Stomach (tissue), 19 donors: ENCODE measurements at regions of chr10 and their contacts with region 1.

Region 1: GRCh38 chr10:511101-511848 is 178.2 kb downstream of the DIP2C start:
- DNase-seq: peak; percentile 95 to 97
- H3K4me3 ChIP-seq: no peak overlapping the region
- H3K27ac ChIP-seq: peak overlapping the region; percentile 40 to 79 (median 68)
- H3K4me1 ChIP-seq: peaks cover 7 to 63% (median 40%) of the 10 kb centered on the region in 4 donors
- H3K27me3 ChIP-seq: no peaks in the 10 kb centered on the region
- CTCF ChIP-seq: peak in 6 of 7 experiments; percentile 91 to 98 (median 96)
- EP300 ChIP-seq: no peak
- POLR2A ChIP-seq: no peak

Region 2: GRCh38 chr10:373522-374309 is 137.6 kb before region 1 on chr10:
- intact Hi-C with region 1: no loop called
- DNase-seq: peak in 1 of 2 donors; percentile 54
- H3K4me3 ChIP-seq: no peak overlapping the region
- H3K27ac ChIP-seq: peak overlapping the region in 2 of 5 donors; percentile 10 to 83
- H3K4me1 ChIP-seq: peaks cover 0 to 52% (median 25%) of the 10 kb centered on the region in 4 donors
- H3K27me3 ChIP-seq: no peaks in the 10 kb centered on the region
- CTCF ChIP-seq: no peak
- EP300 ChIP-seq: no peak
- POLR2A ChIP-seq: no peak

Region 3: GRCh38 chr10:541750-542371 is 30.6 kb after region 1 on chr10:
- intact Hi-C with region 1: no loop called
- DNase-seq: peak; percentile 27 to 70
- H3K4me3 ChIP-seq: no peak overlapping the region
- H3K27ac ChIP-seq: no peak overlapping the region
- H3K4me1 ChIP-seq: peaks cover 8 to 33% (median 21%) of the 10 kb centered on the region in 4 donors
- H3K27me3 ChIP-seq: no peaks in the 10 kb centered on the region
- CTCF ChIP-seq: no peak
- EP300 ChIP-seq: no peak
- POLR2A ChIP-seq: no peak

Region 4: GRCh38 chr10:689433-690371 is 178.4 kb after region 1 on chr10 and contains the start of gene DIP2C:
- intact Hi-C with region 1: loop called (anchors 10 kb)
- DNase-seq: peak; percentile 71 to 93
- H3K4me3 ChIP-seq: peak within 1 kb of the TSS; percentile 74 to 84 (median 82)
- H3K27ac ChIP-seq: peak within 1 kb of the TSS; percentile 83 to 96 (median 87)
- H3K4me1 ChIP-seq: peaks cover 0 to 44% (median 32%) of the 10 kb centered on the region in 4 donors
- H3K27me3 ChIP-seq: peaks cover 0 to 15% (median 0%) of the 10 kb centered on the region in 3 donors
- CTCF ChIP-seq: no peak
- EP300 ChIP-seq: no peak
- POLR2A ChIP-seq: no peak
- total RNA-seq, gene DIP2C: 19.3 to 40.1 (median 29.5) TPM

Region 5: GRCh38 chr10:784403-785088 is 273.3 kb after region 1 on chr10:
- intact Hi-C with region 1: loop called (anchors 5 kb)
- DNase-seq: peak; percentile 69 to 86
- H3K4me3 ChIP-seq: peak overlapping the region; percentile 44 to 47 (median 45)
- H3K27ac ChIP-seq: peak overlapping the region in 1 of 5 donors; percentile 60
- H3K4me1 ChIP-seq: peaks cover 9 to 29% (median 24%) of the 10 kb centered on the region in 4 donors
- H3K27me3 ChIP-seq: peaks cover 0 to 26% (median 6%) of the 10 kb centered on the region in 3 donors
- CTCF ChIP-seq: peak in 2 of 7 experiments; percentile 10 to 11
- EP300 ChIP-seq: no peak
- POLR2A ChIP-seq: no peak

Region 6: GRCh38 chr10:1180836-1181235 is 669.6 kb after region 1 on chr10:
- intact Hi-C with region 1: no loop called
- DNase-seq: no peak
- H3K4me3 ChIP-seq: no peak overlapping the region
- H3K27ac ChIP-seq: no peak overlapping the region
- H3K4me1 ChIP-seq: peaks cover 0 to 5% (median 0%) of the 10 kb centered on the region in 4 donors
- H3K27me3 ChIP-seq: peaks cover 0 to 16% (median 0%) of the 10 kb centered on the region in 3 donors
- CTCF ChIP-seq: no peak
- EP300 ChIP-seq: no peak
- POLR2A ChIP-seq: no peak